H1 (cell line): ENCODE measurements at regions of chr20 and their contacts with region 1.

Region 1: GRCh38 chr20:8043687-8044282 is 24.2 kb upstream of the TMX4 start:
- DNase-seq: no peak
- H3K4me3 ChIP-seq: no peak overlapping the region
- H3K27ac ChIP-seq: no peak overlapping the region
- H3K4me1 ChIP-seq: no peaks in the 10 kb centered on the region
- H3K27me3 ChIP-seq: no peaks in the 10 kb centered on the region
- CTCF ChIP-seq: peak in 2 of 3 experiments; percentile 53 to 55; a peak in 3 of 4 replicates
- EP300 ChIP-seq: no peak
- POLR2A ChIP-seq: no peak
- RAD21 ChIP-seq: peak; percentile 70 to 71

Region 2: DNA sequence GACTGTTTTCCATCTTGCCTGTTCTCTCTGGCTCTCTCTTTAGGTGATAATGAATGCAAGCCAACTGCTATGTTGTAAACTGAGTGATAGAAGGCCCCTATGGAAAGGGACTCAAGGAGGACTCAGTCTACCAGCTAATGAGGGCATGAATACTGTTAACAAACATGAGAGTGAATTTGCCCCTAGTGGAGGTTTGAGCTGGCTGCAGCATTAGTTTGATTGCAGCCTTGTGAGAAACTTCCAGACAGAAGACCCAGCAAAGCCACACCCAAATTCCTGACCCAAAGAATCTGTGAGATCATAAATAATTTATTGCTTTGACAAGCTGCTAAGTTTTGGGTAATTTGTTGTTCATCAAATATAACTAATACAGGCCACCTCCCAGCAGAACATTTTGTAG is 38.2 kb after region 1 on chr20:
- CTCF ChIA-PET with region 1: interaction called, 10 read pairs
- POLR2A ChIA-PET with region 1: no interaction called
- DNase-seq: peak in 1 of 2 experiments; percentile 3
- H3K4me3 ChIP-seq: no peak overlapping the region
- H3K27ac ChIP-seq: no peak overlapping the region
- H3K4me1 ChIP-seq: no peaks in the 10 kb centered on the region
- H3K27me3 ChIP-seq: no peaks in the 10 kb centered on the region
- CTCF ChIP-seq: peak in 2 of 3 experiments; percentile 43 to 72; a peak in 3 of 4 replicates
- EP300 ChIP-seq: no peak
- POLR2A ChIP-seq: no peak
- RAD21 ChIP-seq: peak; percentile 12 to 32; a peak in 1 of 4 replicates

Region 3: DNA sequence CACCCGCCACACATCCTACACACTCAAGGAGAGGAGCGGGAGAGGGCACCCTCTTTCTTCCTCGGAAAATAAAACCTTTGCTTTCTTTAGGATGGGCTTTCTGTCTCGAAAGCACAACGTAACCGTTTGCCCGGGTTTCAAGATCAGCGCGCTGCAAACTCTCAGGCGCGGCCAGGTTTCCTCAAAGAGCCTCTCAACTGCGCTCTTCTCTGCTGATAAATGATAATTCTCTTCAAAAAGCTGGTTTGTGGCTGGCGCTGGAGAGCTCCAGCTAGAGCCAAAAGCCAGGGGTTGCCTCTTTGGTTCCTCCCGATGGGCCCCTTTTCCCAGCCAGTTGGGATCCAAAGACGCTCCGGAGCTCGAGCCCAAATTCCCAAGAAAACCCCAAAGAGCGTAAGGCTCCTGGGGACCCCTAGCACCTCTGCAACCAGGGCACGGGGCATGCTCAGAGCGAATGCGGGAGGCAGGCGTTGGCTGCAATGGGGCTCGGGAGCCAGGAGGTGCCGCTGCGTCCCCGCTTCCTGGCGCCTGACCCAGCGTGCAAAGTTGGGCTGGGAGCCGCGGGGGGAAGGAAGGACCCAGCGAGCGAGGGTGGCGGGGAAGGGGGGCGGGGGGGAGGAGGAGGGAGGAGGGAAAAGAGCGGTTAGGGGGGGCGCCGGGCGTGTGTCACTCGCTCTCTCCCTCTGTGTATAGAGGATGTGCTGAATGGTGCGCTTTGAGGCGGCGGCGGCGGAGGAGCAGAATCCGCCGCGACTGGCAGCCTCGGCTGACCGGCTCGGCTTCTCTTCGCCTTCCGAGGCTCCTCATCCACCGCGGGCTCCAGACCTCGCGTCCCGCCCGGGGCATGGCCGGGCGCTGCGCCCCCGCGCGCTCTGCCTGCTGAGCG is 88.1 kb after region 1 on chr20 and contains the start of gene PLCB1:
- CTCF ChIA-PET with region 1: interaction called, 11 read pairs
- POLR2A ChIA-PET with region 1: no interaction called
- DNase-seq: peak; percentile 69 to 91
- H3K4me3 ChIP-seq: peak within 1 kb of the TSS; percentile 35 to 77 (median 54)
- H3K27ac ChIP-seq: no peak within 1 kb of the TSS
- H3K4me1 ChIP-seq: peaks cover 0 to 6% (median 2%) of the 10 kb centered on the region in 4 experiments; a peak in 2 of 7 replicates
- H3K27me3 ChIP-seq: peaks cover 8 to 28% (median 19%) of the 10 kb centered on the region in 4 experiments
- CTCF ChIP-seq: peak; percentile 87 to 97 (median 89)
- EP300 ChIP-seq: no peak
- POLR2A ChIP-seq: no peak
- RAD21 ChIP-seq: peak; percentile 92
- total RNA-seq, gene PLCB1: 8.6 and 9.1 TPM in 2 replicates